Posterior vena cava (tissue), 2 donors: ENCODE measurements at regions of chr4 and their contacts with region 1.

Region 1: DNA sequence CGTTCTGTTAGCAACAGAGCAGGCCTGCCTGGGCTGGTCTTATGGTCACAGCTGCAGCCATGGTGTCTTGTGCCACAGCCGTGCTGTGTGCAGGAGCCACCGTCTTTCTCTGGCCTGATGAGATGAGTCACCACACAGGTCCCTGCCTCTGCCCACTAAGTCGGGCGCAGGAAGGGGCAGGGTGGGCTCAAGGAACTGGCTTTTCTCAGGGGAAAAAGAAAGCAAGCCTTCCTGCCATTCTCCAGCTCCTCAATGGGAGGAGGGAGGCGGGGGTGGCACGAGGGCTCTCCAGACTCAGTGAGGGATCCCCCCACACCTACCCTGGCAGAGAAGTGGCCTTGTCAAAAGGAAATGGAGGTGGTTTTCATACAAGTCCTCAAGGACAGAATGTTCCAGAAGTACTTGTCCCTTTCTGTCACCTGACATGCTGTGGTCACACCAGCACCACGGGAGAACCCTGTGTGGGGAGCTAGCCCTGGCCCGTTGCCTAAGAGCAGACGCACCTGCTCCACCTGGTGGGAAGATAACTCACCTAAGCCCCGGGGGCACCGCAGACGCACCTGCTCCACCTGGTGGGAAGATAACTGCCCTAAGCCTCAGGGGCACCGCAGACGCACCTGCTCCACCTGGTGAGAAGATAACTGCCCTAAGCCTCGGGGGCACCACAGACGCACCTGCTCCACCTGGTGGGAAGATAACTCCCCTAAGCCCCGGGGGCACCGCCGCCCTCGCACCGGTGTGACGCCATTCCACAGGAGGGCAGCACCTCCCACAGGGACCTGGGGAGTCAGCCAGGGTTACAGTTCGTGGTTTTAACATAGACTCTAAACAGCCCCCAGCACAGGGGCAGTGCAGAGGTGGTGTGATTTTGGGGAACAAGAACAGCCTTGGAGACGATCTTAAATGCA is 18.5 kb downstream of the UVSSA start:
- DNase-seq: peak; percentile 68

Region 2: DNA sequence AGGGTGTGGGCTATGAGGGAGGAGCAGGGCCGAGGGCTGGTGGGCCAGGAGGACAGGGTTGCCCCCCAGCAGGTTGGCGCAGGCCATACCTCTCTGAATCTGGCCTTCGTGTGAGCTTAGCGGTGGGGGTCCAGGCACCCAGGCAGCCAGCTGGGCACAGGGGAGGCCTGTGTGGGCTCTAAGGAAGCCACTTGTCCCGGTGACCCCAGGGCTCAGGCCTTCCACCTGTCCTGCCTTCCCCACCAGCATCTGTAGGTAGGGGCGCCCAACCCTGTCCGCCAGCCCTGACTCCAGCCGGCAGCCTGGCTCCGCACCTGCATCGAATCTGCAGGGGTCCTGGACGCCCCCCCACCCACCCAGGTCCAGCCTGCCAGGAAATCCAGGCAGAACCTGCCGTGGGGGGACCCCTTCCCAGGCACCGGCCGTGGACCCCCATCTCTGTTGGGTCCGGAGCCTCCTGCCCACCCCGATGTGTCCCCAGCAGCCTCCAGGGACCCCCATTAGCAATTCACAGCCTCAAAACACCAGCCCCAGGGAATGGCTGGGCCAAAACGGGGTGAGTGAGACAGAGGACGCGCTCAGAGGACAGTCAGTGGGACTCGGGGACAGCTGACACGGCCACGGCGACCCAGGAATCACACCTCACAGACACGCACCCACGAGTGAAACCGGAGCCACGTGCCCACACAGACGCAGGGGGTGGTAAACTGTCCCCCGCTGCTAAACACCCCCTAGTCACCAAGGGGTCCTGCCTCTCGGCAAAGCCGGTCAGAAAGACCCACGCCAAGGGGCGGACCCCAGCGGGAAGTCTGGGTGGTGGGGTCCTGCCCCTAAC is 166.9 kb after region 1 on chr4:
- intact Hi-C with region 1: loop called in 1 of 2 experiments (anchors 1 kb)
- DNase-seq: peak; percentile 64